ENCODE measurements at regions of chr15 and their contacts with region 1.

Region 1: GRCh38 chr15:43285609-43286037 is 18.9 kb upstream of the TGM5 start:
- DNase-seq: peak; percentile 67
- ATAC-seq: peak; percentile 97
- H3K4me3 ChIP-seq: no peak overlapping the region
- H3K27ac ChIP-seq: no peak overlapping the region
- H3K4me1 ChIP-seq: peaks cover 1% of the 10 kb centered on the region; the same call in 1 of the 2 replicates
- H3K27me3 ChIP-seq: peaks cover 37% of the 10 kb centered on the region
- CTCF ChIP-seq: peak; percentile 96
- POLR2A ChIP-seq: no peak
- RAD21 ChIP-seq: peak; percentile 94

Region 2: DNA sequence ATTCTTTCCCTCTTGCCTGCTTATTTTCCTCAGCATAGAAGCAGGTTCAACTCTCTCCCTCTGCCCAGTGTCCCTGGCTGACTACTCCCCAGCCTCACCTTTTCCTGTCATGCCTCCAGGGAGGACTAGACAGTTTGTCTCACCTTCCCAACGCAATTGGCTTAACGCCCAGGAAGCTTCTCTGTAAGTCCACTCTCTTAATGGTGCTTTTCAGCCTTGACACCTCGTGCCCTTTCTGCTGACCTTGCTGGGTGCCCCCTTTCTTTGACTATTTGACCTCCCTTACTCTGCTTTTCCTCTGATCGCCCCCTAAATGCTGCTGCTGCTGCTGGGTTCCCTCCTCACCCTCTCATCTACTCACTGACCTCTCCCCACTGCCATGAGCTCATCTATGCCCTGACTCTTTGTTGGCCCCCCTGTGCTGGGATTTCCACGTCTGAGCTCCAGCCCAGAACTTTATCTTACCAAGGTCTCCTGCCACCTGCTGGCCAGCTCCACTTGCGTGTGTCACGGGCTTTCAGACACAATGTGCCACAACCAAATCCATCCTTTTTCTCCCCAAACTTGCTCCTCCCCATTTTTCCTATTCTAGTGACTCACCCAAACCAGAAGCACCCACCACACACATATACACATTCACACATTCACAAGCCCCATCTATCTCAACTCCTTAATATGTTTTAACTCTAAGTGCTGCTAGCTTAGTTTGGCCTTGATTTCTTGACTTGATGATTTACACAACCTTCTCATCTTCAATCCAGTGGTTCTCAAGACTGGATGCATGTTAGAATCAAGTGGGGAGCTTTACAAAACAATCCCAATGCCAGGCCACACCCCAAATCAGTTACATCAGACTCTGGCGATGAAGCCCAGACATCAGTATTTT is 81.4 kb before region 1 on chr15:
- CTCF ChIA-PET with region 1: interaction called, 4 read pairs
- POLR2A ChIA-PET with region 1: no interaction called
- dilution Hi-C with region 1: no loop called
- in situ Hi-C with region 1: no loop called
- intact Hi-C with region 1: loop called (anchors 1 kb)
- DNase-seq: peak; percentile 75
- ATAC-seq: peak; percentile 93
- H3K4me3 ChIP-seq: no peak overlapping the region
- H3K27ac ChIP-seq: no peak overlapping the region
- H3K4me1 ChIP-seq: no peaks in the 10 kb centered on the region
- H3K27me3 ChIP-seq: peaks cover 51% of the 10 kb centered on the region
- CTCF ChIP-seq: peak; percentile 67
- POLR2A ChIP-seq: no peak
- RAD21 ChIP-seq: peak; percentile 60

Region 3: GRCh38 chr15:43225201-43225949 is 60.2 kb before region 1 on chr15:
- CTCF ChIA-PET with region 1: interaction called, 37 read pairs
- POLR2A ChIA-PET with region 1: no interaction called
- dilution Hi-C with region 1: no loop called
- in situ Hi-C with region 1: no loop called
- intact Hi-C with region 1: loop called (anchors 1 kb)
- DNase-seq: peak; percentile 63
- ATAC-seq: peak; percentile 90
- H3K4me3 ChIP-seq: no peak overlapping the region
- H3K27ac ChIP-seq: no peak overlapping the region
- H3K4me1 ChIP-seq: no peaks in the 10 kb centered on the region
- H3K27me3 ChIP-seq: peaks cover 32% of the 10 kb centered on the region
- CTCF ChIP-seq: peak; percentile 75
- POLR2A ChIP-seq: no peak
- RAD21 ChIP-seq: peak; percentile 75

Region 4: GRCh38 chr15:43299411-43299810 is 13.8 kb after region 1 on chr15:
- CTCF ChIA-PET with region 1: no interaction called
- POLR2A ChIA-PET with region 1: no interaction called
- dilution Hi-C with region 1: no loop called
- in situ Hi-C with region 1: no loop called
- intact Hi-C with region 1: no loop called
- DNase-seq: no peak
- ATAC-seq: no peak
- H3K4me3 ChIP-seq: no peak overlapping the region
- H3K27ac ChIP-seq: no peak overlapping the region
- H3K4me1 ChIP-seq: no peaks in the 10 kb centered on the region; the same call in 1 of the 2 replicates
- H3K27me3 ChIP-seq: peaks cover 42% of the 10 kb centered on the region
- CTCF ChIP-seq: no peak
- POLR2A ChIP-seq: no peak
- RAD21 ChIP-seq: no peak